ENCODE measurements at regions of chr1 and their contacts with region 1.

Region 1: DNA sequence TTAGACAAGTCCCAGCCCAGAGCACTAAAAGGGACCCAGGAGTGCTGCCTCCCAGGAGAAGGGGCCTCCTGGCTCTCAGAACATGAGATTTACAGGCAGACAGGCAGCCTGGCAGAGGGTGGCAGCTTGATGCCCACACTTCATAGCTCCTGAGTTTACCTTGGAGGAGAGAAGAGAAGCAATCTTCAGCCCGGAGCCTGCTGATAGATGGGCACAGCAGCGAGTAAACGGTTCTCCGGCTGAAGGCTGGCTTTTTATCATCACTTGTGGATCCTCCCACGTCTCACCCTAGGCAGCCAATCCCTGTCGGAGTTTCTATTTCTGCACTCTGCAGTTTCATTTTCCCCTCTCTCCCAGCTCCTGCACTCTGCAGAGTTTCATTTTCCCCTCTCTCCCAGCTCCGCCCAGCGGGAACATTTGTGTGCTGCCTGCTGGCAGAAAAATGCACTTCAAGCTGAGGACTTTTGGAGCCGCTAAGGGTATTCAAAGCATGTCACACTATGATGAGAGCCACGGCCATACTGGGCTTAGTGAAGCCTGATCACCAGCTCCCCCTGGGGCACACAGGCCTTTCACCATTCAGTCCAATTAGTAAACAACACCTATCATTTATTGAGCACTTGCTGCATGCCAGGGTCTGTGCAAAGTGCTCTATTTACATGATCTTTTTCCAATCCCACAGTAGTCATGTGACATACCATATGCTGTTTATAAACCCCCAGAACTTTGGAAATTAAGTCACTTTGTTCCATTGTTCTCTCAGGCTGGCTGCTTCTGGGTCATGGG is at the start of gene IFI6:
- DNase-seq: peak; percentile 88
- ATAC-seq: peak; percentile 98
- total RNA-seq, gene IFI6: 40.6 to 143 TPM

Region 2: DNA sequence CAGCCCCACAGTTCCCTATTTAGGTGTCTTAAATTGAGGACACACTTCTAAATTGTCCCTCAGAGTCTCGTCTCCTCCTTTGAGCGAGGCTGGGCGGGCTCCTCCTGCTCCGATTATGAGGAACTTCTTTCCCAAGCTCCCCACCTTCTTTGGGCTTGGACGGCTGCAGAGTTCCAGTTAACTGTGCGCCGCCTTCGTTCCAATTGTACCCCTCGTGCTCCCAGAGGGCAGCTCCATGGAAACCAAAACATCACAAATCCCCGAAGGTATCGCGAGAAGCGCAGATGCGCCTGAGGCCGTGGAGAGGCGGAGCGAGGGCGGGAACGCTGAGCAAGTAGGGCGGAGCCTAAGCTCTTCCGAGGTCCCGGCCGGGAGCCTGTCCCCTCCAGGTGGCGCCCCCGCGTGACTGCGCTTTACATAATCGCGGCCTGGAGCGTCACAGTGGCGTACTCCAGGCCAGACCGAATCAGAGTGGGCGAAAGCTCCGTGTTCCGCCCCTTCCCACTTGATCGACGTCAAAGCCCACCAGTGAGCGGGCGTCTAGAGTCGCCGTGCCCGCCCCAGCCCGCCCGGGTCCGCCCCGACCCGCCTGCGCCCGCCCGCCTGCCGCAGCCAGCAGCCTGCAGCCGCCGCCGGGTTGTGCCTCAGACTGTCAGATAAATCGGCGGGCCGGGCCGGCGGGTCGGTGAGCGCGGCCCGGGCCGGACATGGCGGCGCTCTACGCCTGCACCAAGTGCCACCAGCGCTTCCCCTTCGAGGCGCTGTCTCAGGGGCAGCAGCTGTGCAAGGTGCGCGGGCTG is 53.4 kb after region 1 on chr1 and contains the start of gene FAM76A:
- intact Hi-C with region 1: loop called in 1 of 2 experiments (anchors 5 kb)
- DNase-seq: peak; percentile 100
- ATAC-seq: peak; percentile 97 to 99
- total RNA-seq, gene FAM76A: 13.2 to 13.5 TPM

Measured in left cardiac atrium (tissue), 4 donors.